Activated CD4-positive, alpha-beta memory T cell treated with anti-CD3 and anti-CD28 coated beads for 36 hours (primary cell): ENCODE measurements at regions of chr13 and their contacts with region 1.

Region 1: DNA sequence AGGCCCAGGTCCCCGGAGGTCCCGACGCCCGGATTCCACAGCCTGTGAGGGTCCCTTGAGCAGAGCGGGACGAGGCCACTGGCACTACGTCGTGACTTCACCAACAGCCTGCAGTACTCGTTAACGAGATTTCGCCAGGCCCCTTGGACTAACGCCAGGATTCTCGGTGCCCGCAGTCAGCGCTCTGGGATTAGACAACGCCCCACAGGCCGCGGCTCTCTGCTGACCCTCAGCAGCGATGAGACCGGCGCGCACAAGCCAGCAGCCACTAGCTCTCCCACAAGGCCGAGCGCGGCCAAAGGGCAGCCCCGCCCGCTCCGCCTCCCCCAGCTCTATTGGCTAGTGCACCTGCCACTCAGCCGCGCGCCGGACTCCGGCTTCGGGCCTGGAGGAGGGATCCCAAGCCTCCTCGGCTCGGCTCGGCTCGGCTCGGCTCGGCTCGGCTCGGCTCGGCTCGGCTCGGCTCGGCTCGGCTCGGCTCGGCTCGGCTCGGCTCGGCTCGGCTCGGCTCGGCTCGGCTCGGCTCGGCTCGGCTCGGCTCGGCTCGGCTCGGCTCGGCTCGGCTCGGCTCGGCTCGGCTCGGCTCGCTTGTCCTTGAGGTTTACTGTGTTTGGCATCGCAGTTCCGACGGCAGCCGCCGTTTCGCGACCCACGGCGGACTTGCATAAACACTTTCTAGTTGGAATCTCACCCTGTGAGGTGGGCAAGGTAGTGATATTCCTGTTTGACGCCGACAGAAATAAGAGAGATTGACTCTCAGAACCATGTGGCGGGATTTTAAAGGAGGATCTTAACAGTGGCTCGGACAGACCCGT is 231.7 kb upstream of the SERP2 start:
- DNase-seq: peak; percentile 96
- H3K4me3 Mint-ChIP-seq: peak overlapping the region; percentile 85
- H3K27ac Mint-ChIP-seq: peak overlapping the region; percentile 75
- H3K4me1 Mint-ChIP-seq: peaks cover 12% of the 10 kb centered on the region
- H3K27me3 Mint-ChIP-seq: peaks cover 2% of the 10 kb centered on the region

Region 2: GRCh38 chr13:44191504-44192171 is 49.7 kb after region 1 on chr13:
- CTCF ChIA-PET with region 1: no interaction called
- POLR2A ChIA-PET with region 1: no interaction called
- intact Hi-C with region 1: loop called (anchors 2 kb)
- DNase-seq: peak; percentile 56
- H3K4me3 Mint-ChIP-seq: no peak overlapping the region
- H3K27ac Mint-ChIP-seq: no peak overlapping the region
- H3K4me1 Mint-ChIP-seq: peaks cover 26% of the 10 kb centered on the region
- H3K27me3 Mint-ChIP-seq: peaks cover 16% of the 10 kb centered on the region